PC-9 (cell line): ENCODE measurements at regions of chr22 and their contacts with region 1.

Region 1: DNA sequence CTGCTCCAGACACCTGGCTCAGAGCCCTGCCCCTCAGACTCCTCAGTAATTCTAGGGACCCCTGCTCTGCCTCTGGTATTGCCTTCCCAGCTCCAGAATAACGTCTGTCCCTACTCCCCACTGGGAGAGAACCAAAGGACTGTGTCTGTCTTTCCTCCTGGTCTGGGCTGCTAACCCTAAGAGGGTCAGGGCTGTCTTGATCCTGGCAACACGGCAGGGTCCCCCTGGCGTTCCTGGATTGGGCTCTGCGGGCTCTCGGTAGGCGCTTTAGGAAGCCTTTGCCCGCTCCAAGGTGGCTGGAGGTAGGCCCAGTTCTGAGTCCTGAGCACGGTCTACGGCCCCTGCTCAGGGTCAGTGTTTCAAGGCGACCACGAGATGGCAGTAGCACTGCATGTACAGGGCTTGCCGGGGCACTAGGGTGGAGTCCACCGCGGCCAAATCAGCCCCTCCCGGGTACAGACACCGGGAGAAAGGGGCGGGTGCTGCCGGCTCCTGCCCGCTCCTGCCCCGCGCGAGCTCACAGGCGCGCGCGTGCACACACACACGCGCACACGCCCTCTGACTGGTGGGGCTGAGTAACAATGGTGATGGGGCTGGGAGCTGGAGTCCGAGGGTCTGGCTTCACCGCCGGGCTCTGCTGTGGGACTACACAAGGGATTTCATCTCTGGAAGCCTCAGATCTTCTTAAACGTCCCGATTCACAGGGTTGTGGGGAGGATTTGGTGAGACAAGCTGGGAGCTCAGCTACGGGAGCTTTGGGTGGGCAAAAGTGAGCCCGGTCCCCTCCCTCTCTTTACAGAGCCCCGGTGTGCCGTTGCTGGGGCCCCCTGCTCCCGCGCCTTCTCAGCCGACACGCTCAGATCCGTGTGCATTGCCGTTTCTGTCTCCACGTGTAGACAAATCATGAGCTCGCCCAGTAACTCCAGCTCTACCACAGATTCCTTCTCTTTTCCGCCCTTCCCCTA is 30.1 kb upstream of the HMOX1 start:
- DNase-seq: peak; percentile 75 to 92
- H3K4me3 ChIP-seq: peak overlapping the region; percentile 67
- H3K27ac ChIP-seq: peak overlapping the region; percentile 33
- H3K4me1 ChIP-seq: peaks cover 12% of the 10 kb centered on the region
- H3K27me3 ChIP-seq: no peaks in the 10 kb centered on the region
- CTCF ChIP-seq: peak; percentile 83

Region 2: GRCh38 chr22:35399678-35400334 is 49.0 kb after region 1 on chr22 and contains the start of gene MCM5:
- CTCF ChIA-PET with region 1: interaction called, 5 read pairs
- POLR2A ChIA-PET with region 1: interaction called, 4 read pairs
- intact Hi-C with region 1: loop called (anchors 5 kb)
- DNase-seq: peak; percentile 95 to 96
- H3K4me3 ChIP-seq: peak within 1 kb of the TSS; percentile 79
- H3K27ac ChIP-seq: peak within 1 kb of the TSS; percentile 58
- H3K4me1 ChIP-seq: peaks cover 9% of the 10 kb centered on the region
- H3K27me3 ChIP-seq: no peaks in the 10 kb centered on the region
- CTCF ChIP-seq: no peak
- total RNA-seq, gene MCM5: 71.7 and 115 TPM in 2 replicates

Region 3: DNA sequence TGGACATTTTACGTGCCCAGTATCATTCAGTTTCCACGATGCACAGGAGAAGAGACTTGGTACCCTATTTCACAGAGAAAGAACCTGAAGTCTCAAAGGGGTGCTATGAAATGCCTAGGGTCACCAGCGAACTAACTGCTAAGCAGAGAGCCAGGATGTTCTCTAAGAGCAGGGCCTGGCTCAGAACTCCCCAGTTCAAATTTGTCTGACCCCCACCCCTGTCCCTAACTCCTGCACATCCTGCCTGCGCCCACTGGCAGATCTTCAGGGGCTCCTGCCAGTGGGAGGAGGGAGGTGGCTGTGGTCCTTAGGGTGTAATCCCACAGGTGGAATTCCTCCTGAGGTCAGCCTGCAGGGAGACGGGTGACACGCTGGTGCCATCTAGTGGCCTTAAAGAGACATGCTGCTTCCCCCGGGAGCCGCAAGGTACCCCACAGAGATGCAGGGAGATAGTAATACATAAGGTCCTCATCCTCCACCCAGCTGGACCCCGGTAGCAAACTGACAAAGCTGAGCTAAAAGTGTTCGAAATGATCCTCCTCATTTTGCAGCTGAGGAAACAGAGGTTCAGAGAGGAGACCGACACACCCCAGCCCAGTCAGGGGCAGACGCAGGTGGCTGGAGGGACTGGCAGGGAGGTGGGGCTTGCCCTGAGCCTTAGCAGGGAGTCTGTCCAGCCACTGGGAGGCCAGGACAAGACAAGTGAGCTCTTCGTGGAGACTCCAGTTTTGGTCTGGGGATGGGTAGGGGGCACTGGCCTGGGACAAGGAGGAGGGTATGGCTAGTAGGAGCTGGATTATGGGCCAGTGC is 232.2 kb after region 1 on chr22:
- CTCF ChIA-PET with region 1: no interaction called
- POLR2A ChIA-PET with region 1: no interaction called
- intact Hi-C with region 1: loop called (anchors 1 kb)
- DNase-seq: peak; percentile 61 to 62
- H3K4me3 ChIP-seq: peak overlapping the region; percentile 39
- H3K27ac ChIP-seq: peak overlapping the region; percentile 39; the same call in 1 of the 2 replicates
- H3K4me1 ChIP-seq: peaks cover 56% of the 10 kb centered on the region
- H3K27me3 ChIP-seq: no peaks in the 10 kb centered on the region
- CTCF ChIP-seq: peak; percentile 97

Region 4: GRCh38 chr22:35622191-35622913 is 271.5 kb after region 1 on chr22:
- CTCF ChIA-PET with region 1: interaction called, 9 read pairs
- POLR2A ChIA-PET with region 1: interaction called, 9 read pairs
- intact Hi-C with region 1: loop called (anchors 1 kb)
- DNase-seq: peak; percentile 96 to 99
- H3K4me3 ChIP-seq: peak overlapping the region; percentile 48; the same call in 1 of the 2 replicates
- H3K27ac ChIP-seq: peak overlapping the region; percentile 83
- H3K4me1 ChIP-seq: peaks cover 44% of the 10 kb centered on the region
- H3K27me3 ChIP-seq: no peaks in the 10 kb centered on the region
- CTCF ChIP-seq: no peak

Region 5: DNA sequence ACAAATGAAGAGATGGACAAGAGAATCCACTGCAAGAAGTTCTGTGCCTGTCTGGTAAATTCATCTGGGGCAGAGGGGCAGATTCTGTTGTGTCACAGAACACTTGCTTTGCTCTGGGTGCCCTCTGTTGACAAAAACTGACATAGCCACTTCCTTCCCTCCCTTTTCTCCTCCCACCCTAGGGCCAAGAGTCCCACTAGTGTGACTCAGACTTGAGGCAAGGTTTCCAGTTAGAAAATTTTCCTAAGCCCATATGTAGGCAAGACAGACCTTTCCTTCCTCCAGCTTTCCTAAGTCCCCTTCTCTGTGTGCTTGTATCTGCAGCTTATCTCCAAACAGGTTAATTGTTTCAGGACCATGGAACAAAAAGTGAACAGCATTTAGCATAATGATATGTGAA is 571.0 kb after region 1 on chr22:
- CTCF ChIA-PET with region 1: no interaction called
- POLR2A ChIA-PET with region 1: no interaction called
- intact Hi-C with region 1: loop called (anchors 5 kb)
- DNase-seq: peak; percentile 77 to 86
- H3K4me3 ChIP-seq: no peak overlapping the region
- H3K27ac ChIP-seq: peak overlapping the region; percentile 71
- H3K4me1 ChIP-seq: peaks cover 30% of the 10 kb centered on the region
- H3K27me3 ChIP-seq: no peaks in the 10 kb centered on the region
- CTCF ChIP-seq: peak; percentile 72

Region 6: DNA sequence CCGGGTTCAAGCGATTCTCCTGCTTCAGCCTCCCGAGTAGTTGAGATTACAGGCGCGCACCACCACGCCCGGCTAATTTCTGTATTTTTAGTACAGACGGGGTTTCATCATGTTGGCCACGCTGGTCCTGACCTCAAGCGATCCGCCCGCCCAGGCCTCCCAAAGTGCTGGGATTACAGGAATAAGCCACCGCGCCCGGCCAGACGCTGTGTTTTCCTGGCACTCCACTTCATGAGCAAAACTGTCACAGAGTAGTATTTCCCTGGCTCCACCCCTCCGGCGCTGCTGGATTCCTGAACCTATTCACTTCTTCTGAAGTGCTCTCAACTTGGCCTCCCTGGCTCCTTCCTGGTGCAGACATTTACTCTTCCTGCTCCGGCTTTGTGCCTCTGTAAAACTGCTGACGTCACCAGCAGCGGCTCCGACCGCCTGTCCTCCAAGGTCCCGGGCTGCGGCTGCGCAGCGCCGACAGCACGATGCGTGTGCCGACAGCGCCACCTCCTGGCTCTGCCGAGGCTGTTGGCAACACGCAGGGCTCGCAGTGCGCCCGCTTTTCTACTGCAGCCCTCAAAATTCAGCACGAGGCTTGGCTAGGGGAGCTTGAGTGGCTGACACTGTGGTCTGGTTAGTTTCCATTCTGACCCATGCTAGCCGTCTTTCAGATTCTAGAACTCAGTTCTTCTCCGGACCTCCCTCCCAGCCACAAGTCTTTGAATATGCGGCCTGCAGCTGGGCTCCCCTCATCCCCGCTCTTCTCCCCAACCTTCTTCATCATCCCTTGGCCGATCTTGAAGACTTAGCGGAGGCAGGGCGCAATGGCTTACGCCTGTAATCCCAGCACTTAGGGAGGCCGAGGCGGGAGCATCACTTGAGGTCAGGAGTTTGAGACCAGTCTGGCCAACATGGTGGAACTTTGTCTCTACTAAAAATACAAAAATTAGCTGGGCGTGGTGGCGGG is 773.1 kb after region 1 on chr22:
- CTCF ChIA-PET with region 1: no interaction called
- POLR2A ChIA-PET with region 1: no interaction called
- intact Hi-C with region 1: loop called (anchors 1 kb)
- DNase-seq: peak; percentile 94 to 97
- H3K4me3 ChIP-seq: peak overlapping the region; percentile 50
- H3K27ac ChIP-seq: peak overlapping the region; percentile 76
- H3K4me1 ChIP-seq: peaks cover 8% of the 10 kb centered on the region
- H3K27me3 ChIP-seq: 0 out of 2 replicates have a peak, but pooled peaks cover 3% of the 10 kb centered on the region
- CTCF ChIP-seq: peak; percentile 99